Right cardiac atrium (tissue), 5 donors: ENCODE measurements at regions of chr1 and their contacts with region 1.

Region 1: GRCh38 chr1:183404456-183404855 is 13.7 kb downstream of the NMNAT2 start:
- DNase-seq: no peak
- ATAC-seq: no peak
- H3K4me3 ChIP-seq: no peak overlapping the region
- H3K27ac ChIP-seq: no peak overlapping the region
- H3K4me1 ChIP-seq: no peaks in the 10 kb centered on the region
- H3K27me3 ChIP-seq: no peaks in the 10 kb centered on the region

Region 2: DNA sequence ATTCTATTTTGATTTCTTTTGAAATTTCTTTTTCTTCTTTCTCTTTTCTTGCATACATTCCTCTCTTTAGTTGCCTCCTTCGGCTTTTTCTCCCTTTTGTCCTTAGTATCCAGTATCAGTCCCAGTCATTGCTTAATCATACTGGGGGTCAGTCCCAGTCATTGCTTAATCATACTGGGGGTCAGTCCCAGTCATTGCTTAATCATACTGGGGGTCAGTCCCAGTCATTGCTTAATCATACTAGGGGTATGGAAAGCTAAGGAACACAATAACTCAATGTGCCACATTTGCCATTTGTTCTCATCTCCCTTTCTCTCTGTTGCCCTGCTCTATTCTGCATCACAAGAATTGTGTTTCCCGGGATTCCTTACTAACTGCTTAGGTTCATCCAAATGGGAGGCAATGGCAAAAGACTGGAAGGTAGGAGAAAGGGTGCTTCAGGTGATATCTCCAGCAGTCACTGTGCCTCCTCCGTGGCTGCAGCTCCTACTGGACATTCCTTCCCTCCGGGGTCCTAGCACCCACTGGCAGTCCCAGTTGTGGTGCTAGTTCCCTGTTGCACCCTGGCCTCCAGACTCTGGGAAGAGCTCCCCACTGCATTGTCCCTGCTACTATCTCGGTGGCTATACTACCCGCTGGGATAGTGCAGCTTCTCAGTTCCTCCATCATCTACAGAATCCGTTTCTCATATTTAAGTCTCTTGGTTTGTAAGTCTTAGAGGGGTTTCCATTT is 413.9 kb before region 1 on chr1:
- intact Hi-C with region 1: no loop called
- DNase-seq: no peak
- ATAC-seq: peak; percentile 54 to 64
- H3K4me3 ChIP-seq: no peak overlapping the region
- H3K27ac ChIP-seq: no peak overlapping the region
- H3K4me1 ChIP-seq: no peaks in the 10 kb centered on the region
- H3K27me3 ChIP-seq: no peaks in the 10 kb centered on the region

Region 3: GRCh38 chr1:183291802-183292514 is 112.5 kb before region 1 on chr1:
- intact Hi-C with region 1: no loop called
- DNase-seq: peak in 2 of 3 donors; percentile 48 to 79
- ATAC-seq: peak in 1 of 2 donors; percentile 41
- H3K4me3 ChIP-seq: no peak overlapping the region
- H3K27ac ChIP-seq: no peak overlapping the region
- H3K4me1 ChIP-seq: peaks cover 5% of the 10 kb centered on the region
- H3K27me3 ChIP-seq: no peaks in the 10 kb centered on the region

Region 4: GRCh38 chr1:183433703-183434102 is 29.2 kb after region 1 on chr1:
- intact Hi-C with region 1: no loop called
- DNase-seq: peak; percentile 18 to 74 (median 73)
- ATAC-seq: peak; percentile 82 to 95
- H3K4me3 ChIP-seq: peak overlapping the region; percentile 72
- H3K27ac ChIP-seq: peak overlapping the region; percentile 70
- H3K4me1 ChIP-seq: no peaks in the 10 kb centered on the region
- H3K27me3 ChIP-seq: no peaks in the 10 kb centered on the region

Region 5: DNA sequence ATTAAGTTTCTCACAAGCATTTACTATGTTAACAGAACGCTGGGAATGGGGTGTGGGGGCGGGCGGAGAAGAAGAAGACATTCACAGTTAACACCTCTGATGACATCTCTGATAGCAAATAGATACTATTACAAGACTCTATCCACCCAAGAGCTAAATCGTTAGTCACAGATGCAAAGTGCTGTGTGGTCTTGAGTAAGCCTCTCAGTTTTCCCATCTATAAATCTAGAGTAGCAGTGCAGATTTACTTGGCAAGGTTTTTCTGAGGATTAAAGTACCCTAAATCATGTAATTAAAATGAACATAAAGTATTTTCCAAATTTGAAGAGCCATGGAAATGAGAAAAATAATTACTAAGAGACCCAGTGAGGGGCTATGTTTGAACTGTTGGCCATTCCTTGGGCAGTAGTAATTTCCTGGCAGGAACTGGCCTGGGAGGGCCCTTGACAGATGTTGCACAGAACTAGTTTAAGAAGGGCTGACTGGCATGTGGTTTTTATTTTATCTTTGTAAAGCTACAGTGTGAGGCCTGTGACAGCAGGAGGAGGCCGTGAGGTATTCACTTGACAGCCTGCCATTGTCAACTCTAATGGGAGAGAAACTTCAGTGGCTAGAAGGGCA is 307.4 kb after region 1 on chr1:
- intact Hi-C with region 1: loop called in 1 of 4 experiments (anchors 5 kb)
- DNase-seq: no peak
- ATAC-seq: peak; percentile 77 to 83
- H3K4me3 ChIP-seq: no peak overlapping the region
- H3K27ac ChIP-seq: peak overlapping the region; percentile 90
- H3K4me1 ChIP-seq: peaks cover 2% of the 10 kb centered on the region
- H3K27me3 ChIP-seq: no peaks in the 10 kb centered on the region